ENCODE measurements at regions of chr10 and their contacts with region 1.

Region 1: DNA sequence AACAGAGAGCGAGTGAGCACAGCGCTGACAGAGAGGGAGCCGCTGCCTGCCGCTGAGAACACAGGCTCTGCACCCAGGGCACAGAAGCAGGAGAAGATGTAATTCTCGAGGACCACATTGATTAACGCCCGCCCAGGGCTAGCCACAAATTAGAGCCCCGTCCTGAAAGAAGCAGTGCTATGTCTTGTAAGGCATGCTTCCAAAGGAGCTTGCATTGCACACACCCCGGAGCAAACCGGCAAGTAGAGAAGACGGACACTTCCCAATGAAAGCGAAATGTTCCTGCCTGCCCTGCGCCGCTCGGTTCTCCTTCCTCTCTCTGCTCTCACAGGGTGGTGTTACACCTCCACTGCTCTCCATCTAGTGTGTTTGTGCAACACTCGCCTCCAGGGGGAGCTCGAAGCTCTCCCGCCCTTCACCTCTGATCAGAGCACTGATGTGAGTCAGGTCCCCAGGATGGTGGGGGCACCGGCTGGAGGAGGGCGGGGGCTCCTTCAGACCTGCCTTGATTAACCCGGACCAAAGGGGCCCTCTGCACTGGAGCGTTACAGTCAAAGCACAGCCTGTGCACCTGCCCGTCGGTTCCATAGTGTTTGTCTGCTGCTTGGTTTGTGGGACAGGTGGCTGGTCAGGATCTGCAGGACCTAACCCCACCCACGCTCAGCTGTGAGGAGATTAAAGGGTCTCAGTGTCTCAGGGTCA is 316.5 kb downstream of the ADARB2 start:
- DNase-seq: peak; percentile 69
- H3K4me3 Mint-ChIP-seq: peak overlapping the region; percentile 45
- H3K27ac Mint-ChIP-seq: no peak overlapping the region
- H3K4me1 Mint-ChIP-seq: peaks cover 6% of the 10 kb centered on the region
- H3K27me3 Mint-ChIP-seq: peaks cover 19% of the 10 kb centered on the region
- CTCF ChIP-seq: peak; percentile 83

Region 2: GRCh38 chr10:1395088-1396006 is 25.5 kb before region 1 on chr10:
- CTCF ChIA-PET with region 1: no interaction called
- POLR2A ChIA-PET with region 1: no interaction called
- intact Hi-C with region 1: no loop called
- DNase-seq: no peak
- H3K4me3 Mint-ChIP-seq: no peak overlapping the region
- H3K27ac Mint-ChIP-seq: no peak overlapping the region
- H3K4me1 Mint-ChIP-seq: no peaks in the 10 kb centered on the region
- H3K27me3 Mint-ChIP-seq: no peaks in the 10 kb centered on the region
- CTCF ChIP-seq: no peak

Region 3: DNA sequence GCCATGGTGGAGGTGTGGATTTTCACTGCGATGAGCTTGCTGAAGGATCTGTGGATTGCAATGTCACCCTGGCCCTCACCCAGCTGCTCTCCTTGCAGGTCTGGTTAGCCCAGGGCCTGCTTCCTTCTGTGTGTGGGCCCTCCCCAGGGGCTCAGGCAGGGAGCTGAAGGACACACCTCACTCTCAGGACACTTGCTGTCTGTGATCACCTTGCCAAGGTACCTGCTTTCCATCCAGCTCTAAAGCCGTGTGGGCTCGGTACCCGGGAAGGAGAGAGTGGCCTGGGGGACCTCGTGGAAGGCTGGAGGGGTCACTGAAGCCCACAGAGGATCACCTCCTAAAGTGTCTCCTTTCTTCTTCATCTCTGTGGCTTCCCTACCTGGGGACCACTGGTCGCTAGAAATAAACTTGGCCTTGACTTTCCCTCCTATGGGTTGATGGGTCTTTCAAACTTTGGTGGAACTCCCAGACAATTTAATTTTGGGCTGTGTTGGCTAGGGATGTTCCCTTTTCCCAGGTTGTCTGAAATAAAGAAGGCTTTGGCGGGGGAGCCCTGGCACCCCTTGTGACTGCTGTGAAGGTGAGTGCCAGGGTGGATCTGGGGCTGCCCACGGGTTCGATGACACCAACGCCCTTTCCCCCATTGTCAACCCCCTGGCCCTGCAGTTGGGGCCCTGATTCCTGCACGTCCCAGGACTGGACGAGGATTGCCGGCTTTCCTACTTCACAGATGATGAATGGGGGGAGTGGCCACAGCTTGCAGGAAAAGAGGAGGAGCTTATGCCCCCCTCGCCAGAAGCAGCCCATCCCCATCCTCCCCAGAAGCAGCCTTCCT is 14.5 kb before region 1 on chr10:
- CTCF ChIA-PET with region 1: interaction called, 15 read pairs
- POLR2A ChIA-PET with region 1: interaction called, 3 read pairs
- intact Hi-C with region 1: no loop called
- DNase-seq: no peak
- H3K4me3 Mint-ChIP-seq: no peak overlapping the region
- H3K27ac Mint-ChIP-seq: no peak overlapping the region
- H3K4me1 Mint-ChIP-seq: no peaks in the 10 kb centered on the region
- H3K27me3 Mint-ChIP-seq: peaks cover 13% of the 10 kb centered on the region
- CTCF ChIP-seq: no peak

Region 4: GRCh38 chr10:1434912-1435692 is 14.3 kb after region 1 on chr10:
- CTCF ChIA-PET with region 1: interaction called, 16 read pairs
- POLR2A ChIA-PET with region 1: no interaction called
- intact Hi-C with region 1: no loop called
- DNase-seq: no peak
- H3K4me3 Mint-ChIP-seq: no peak overlapping the region
- H3K27ac Mint-ChIP-seq: no peak overlapping the region
- H3K4me1 Mint-ChIP-seq: no peaks in the 10 kb centered on the region
- H3K27me3 Mint-ChIP-seq: no peaks in the 10 kb centered on the region
- CTCF ChIP-seq: no peak